ENCODE measurements at regions of chr1 and their contacts with region 1.

Region 1: GRCh38 chr1:46179138-46180081 is 3.1 kb upstream of the P3R3URF start:
- DNase-seq: peak; percentile 77
- H3K4me3 ChIP-seq: no peak overlapping the region
- H3K27ac ChIP-seq: no peak overlapping the region
- H3K4me1 ChIP-seq: peaks cover 27% of the 10 kb centered on the region
- H3K27me3 ChIP-seq: no peaks in the 10 kb centered on the region
- CTCF ChIP-seq: peak; percentile 81 to 82
- POLR2A ChIP-seq: no peak

Region 2: GRCh38 chr1:45122724-45123123 is 1056.7 kb before region 1 on chr1:
- CTCF ChIA-PET with region 1: no interaction called
- POLR2A ChIA-PET with region 1: no interaction called
- dilution Hi-C with region 1: no loop called
- intact Hi-C with region 1: no loop called
- DNase-seq: no peak
- H3K4me3 ChIP-seq: no peak overlapping the region
- H3K27ac ChIP-seq: no peak overlapping the region
- H3K4me1 ChIP-seq: no peaks in the 10 kb centered on the region
- H3K27me3 ChIP-seq: peaks cover 0 to 2% of the 10 kb centered on the region in 2 experiments
- CTCF ChIP-seq: no peak
- POLR2A ChIP-seq: no peak

Region 3: GRCh38 chr1:46036894-46037839 is 142.2 kb before region 1 on chr1:
- CTCF ChIA-PET with region 1: interaction called, 134 read pairs
- POLR2A ChIA-PET with region 1: interaction called, 4 read pairs
- dilution Hi-C with region 1: loop called (anchors 25 kb)
- intact Hi-C with region 1: loop called (anchors 1 kb)
- DNase-seq: peak; percentile 84
- H3K4me3 ChIP-seq: no peak overlapping the region
- H3K27ac ChIP-seq: no peak overlapping the region
- H3K4me1 ChIP-seq: peaks cover 4% of the 10 kb centered on the region
- H3K27me3 ChIP-seq: no peaks in the 10 kb centered on the region
- CTCF ChIP-seq: peak; percentile 96 to 97
- POLR2A ChIP-seq: no peak

Region 4: DNA sequence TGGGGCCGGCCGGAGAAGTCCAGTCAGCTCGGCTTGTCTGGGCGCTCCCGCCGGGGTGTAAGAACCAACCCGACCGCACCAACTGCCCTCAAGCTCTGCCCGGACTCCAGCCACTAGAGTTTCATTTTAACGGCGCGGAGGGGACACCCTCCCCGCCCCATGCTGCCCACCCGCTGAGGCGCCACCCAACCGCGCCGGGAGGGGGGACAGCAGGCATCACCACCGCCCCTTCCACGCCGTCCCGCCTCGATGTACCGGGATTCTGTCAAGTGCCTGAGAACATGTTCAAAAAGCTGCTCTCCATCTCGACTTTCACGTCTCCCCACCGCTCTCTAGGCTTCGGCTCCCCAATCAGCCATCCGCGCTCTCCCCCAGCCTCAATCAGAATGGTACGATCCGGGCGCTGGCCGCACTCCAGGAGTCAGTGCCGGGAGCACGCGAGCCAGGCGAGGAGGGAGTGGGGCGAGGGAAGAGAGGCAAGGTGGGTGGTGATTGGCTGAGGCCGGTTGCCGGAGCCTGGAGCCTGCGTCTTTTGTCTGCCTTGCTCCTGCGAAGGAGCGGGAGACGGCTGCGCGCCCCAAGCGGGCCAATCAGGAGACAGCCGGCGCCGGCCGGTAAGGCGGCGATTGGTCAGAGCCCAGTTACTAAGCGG is 46.8 kb before region 1 on chr1 and contains the start of gene PIK3R3:
- CTCF ChIA-PET with region 1: interaction called, 8 read pairs
- POLR2A ChIA-PET with region 1: interaction called, 9 read pairs
- dilution Hi-C with region 1: no loop called
- intact Hi-C with region 1: loop called (anchors 1 kb)
- DNase-seq: peak; percentile 99
- H3K4me3 ChIP-seq: peak within 1 kb of the TSS; percentile 79 to 99 (median 92)
- H3K27ac ChIP-seq: peak within 1 kb of the TSS; percentile 86
- H3K4me1 ChIP-seq: peaks cover 24% of the 10 kb centered on the region
- H3K27me3 ChIP-seq: no peaks in the 10 kb centered on the region
- CTCF ChIP-seq: no peak
- POLR2A ChIP-seq: peak; percentile 99
- total RNA-seq, gene PIK3R3: 14.3 and 14.6 TPM in 2 replicates

Region 5: GRCh38 chr1:46203738-46204405 is 24.5 kb after region 1 on chr1:
- CTCF ChIA-PET with region 1: interaction called, 7 read pairs
- POLR2A ChIA-PET with region 1: no interaction called
- dilution Hi-C with region 1: no loop called
- intact Hi-C with region 1: loop called (anchors 1 kb)
- DNase-seq: peak; percentile 7
- H3K4me3 ChIP-seq: peak overlapping the region; percentile 65 to 90 (median 80)
- H3K27ac ChIP-seq: no peak overlapping the region
- H3K4me1 ChIP-seq: peaks cover 8% of the 10 kb centered on the region
- H3K27me3 ChIP-seq: no peaks in the 10 kb centered on the region
- CTCF ChIP-seq: no peak
- POLR2A ChIP-seq: no peak

Measured in endothelial cell of umbilical vein (primary cell).